ENCODE measurements at regions of chr12 and their contacts with region 1.

Region 1: GRCh38 chr12:116818948-116819832 is 62.1 kb downstream of the HRK start:
- DNase-seq: peak; percentile 92 to 97
- ATAC-seq: peak; percentile 98 to 99 (median 99)
- H3K4me3 ChIP-seq: peak overlapping the region; percentile 83
- H3K27ac ChIP-seq: peak overlapping the region; percentile 94
- H3K4me1 ChIP-seq: peaks cover 10% of the 10 kb centered on the region
- H3K27me3 ChIP-seq: no peaks in the 10 kb centered on the region
- CTCF ChIP-seq: no peak

Region 2: GRCh38 chr12:115953450-115953849 is 865.7 kb before region 1 on chr12:
- intact Hi-C with region 1: loop called in 1 of 2 experiments (anchors 5 kb)
- DNase-seq: no peak
- ATAC-seq: no peak
- H3K4me3 ChIP-seq: no peak overlapping the region
- H3K27ac ChIP-seq: no peak overlapping the region
- H3K4me1 ChIP-seq: peaks cover 11% of the 10 kb centered on the region
- H3K27me3 ChIP-seq: no peaks in the 10 kb centered on the region
- CTCF ChIP-seq: no peak

Region 3: DNA sequence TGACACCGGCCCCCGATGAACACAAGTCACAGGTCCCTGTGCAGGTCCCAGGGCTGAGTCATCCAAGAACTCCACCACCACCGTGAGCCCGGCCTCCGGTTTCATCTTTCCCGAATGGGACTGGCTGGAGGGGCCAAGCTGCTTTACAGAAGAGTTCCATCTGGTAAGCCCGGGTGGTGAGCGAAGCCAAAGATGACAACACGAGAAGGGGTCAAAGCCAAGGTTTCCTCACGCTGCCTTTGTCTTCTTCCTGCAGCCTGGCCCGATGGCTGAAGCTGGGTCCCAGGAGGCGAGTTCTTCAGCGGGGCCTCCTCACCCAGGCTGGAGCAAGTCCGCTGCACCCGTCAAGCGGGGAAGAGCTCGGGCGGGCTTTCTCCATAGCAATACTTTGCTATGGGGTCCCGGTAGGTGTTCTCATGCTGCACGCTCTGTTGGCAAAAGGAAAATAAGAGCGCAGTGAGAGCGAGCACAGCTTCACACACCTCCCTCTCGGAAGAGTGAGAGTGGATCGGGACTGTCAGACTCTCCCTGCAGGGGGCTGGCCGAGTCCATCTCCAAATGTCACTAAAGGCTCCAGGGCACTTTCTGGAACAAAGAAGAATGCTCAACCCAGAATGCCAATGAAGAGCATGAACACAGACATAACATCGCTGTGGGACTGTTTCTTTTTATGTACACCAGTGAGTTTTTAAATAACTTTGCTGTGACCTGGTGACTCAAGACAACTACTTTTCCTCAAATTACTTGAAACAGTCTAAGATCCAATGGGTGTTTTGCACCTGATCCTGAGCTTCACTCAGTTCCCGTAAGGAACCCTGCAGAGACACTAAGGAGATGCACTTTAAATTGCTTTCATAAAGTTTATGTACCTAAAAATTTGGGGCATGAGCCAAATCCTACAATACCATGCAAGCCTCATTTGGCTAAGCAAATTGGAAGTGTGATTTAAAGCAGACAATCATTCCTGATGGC is 101.4 kb before region 1 on chr12:
- intact Hi-C with region 1: loop called in 1 of 2 experiments (anchors 5 kb)
- DNase-seq: peak; percentile 84 to 92
- ATAC-seq: peak; percentile 95 to 98 (median 96)
- H3K4me3 ChIP-seq: peak overlapping the region; percentile 57
- H3K27ac ChIP-seq: peak overlapping the region; percentile 82
- H3K4me1 ChIP-seq: peaks cover 37% of the 10 kb centered on the region
- H3K27me3 ChIP-seq: no peaks in the 10 kb centered on the region
- CTCF ChIP-seq: no peak

Region 4: DNA sequence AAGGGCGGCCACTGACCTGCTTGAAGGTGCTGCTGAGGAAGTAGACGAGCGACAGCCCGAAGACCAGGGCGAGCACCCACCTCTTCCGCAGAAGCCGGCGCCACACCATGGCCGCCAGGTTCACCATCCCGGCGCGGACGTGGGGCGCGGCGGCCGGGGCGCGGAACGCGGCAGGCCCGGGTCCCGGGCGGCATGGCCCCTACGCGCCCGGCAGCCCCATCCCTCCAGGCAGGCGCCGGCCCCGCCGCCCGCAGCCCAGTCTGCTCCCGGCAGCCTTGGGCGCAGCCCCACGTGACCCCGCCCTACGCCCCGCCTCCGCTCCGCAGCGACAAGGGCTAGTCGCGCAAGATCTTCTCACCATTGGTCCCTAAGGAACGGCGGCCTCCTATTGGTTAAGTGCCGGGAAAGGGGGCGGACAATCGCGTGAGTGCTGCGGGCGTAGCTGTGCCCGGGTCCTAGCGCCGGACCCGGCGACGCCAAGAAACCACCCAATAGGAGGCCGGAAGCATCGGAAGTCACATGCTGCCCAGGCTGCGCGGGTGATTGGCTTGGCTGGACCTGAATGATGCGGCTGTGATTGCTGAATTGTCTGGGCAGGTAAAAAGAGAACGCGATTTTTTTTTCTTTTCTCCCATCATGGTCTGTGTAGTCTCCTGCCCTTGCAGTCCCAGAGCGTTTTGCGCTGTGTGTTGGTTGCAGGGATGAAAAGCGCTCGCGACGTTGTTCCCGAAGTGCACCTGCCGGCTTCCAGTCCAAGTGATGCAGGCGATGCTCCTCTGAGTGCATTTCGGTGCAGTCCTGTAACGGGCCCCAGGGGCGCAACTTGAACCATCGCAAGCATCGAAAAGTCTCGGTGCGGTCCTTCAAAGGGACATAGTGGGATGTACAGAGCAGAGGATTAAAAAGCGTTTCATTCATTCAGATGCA is 81.2 kb before region 1 on chr12 and contains the starts of genes RNFT2 and SPRING1:
- intact Hi-C with region 1: loop called (anchors 2 to 5 kb)
- DNase-seq: peak; percentile 99
- ATAC-seq: peak; percentile 100
- H3K4me3 ChIP-seq: peak within 1 kb of the TSS; percentile 86
- H3K27ac ChIP-seq: peak within 1 kb of the TSS; percentile 78
- H3K4me1 ChIP-seq: peaks cover 13% of the 10 kb centered on the region
- H3K27me3 ChIP-seq: no peaks in the 10 kb centered on the region
- CTCF ChIP-seq: no peak
- total RNA-seq, gene RNFT2: 0.22 to 0.64 (median 0.50) TPM
- total RNA-seq, gene SPRING1: 6.3 to 9.9 (median 7.9) TPM